ENCODE measurements at regions of chr7 and their contacts with region 1.

Region 1: DNA sequence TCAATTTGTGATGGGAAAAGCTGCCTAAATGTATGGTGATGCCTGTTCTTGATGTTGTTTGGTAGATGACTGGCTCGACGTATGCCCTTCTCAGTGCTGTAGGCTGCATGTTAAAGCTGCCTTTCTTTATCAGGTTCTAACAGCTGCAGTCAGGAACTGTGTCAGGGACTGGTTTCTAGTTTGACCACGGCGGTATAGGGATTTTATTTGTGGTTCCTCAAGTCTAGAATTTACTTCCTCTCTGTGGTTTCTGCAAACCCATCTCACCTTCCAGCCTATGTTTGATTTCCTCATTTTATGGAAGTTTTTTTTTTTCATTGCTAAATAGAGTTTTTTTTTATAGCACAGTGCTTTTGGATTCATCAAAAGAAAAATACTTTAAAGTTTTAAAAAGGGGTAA is 26.5 kb downstream of the LMTK2 start:
- DNase-seq: peak; percentile 51
- ATAC-seq: peak; percentile 82
- H3K4me3 Mint-ChIP-seq: peak overlapping the region; percentile 62
- H3K27ac Mint-ChIP-seq: peak overlapping the region; percentile 53
- H3K4me1 Mint-ChIP-seq: peaks cover 39% of the 10 kb centered on the region
- H3K27me3 Mint-ChIP-seq: peaks cover 33% of the 10 kb centered on the region

Region 2: DNA sequence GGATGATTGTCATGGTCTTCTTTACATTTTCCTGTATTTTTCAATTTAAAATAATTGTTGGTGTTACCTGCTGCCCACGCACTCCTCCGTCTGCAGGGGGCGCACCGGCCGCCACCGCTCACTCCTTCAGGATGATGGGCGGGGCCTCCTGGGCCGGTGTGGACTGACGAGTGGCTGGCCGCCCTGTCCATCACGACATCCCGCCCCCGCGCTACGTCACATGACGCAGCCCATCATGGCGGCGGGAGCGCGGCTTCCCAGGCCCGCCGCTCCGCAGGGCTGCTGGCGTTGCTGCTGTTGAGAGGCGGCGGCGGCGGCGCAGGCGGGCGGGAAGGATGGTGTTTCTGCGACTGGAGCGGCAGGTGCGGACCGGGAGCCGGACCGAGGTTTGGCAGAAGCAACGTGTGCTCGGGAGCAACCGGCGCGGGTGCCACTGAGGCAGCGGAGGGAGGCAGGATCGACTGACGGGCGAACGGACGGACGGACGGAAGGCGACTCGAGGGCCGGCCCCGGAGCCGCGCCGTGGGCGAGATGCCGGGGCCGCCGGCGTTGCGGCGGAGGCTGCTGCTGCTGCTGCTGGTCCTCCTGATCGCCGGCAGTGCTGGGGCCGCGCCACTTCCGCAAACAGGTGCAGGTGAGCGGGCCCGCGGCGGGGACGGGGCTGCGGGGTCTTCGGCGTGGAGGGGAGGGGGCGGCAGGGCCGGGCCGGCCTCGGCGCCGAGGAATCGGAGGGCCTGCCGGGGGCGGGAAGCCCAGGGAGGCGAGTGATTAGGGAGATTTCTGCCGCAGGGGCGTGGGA is 26.3 kb before region 1 on chr7 and contains the start of gene LMTK2:
- CTCF ChIA-PET with region 1: interaction called, 12 read pairs
- POLR2A ChIA-PET with region 1: interaction called, 7 read pairs
- DNase-seq: peak; percentile 95
- ATAC-seq: peak; percentile 100
- H3K4me3 Mint-ChIP-seq: peak within 1 kb of the TSS; percentile 95
- H3K27ac Mint-ChIP-seq: peak within 1 kb of the TSS; percentile 94
- H3K4me1 Mint-ChIP-seq: peaks cover 15% of the 10 kb centered on the region
- H3K27me3 Mint-ChIP-seq: no peaks in the 10 kb centered on the region
- total RNA-seq, gene LMTK2: 10.2 TPM

Region 3: GRCh38 chr7:98234429-98235147 is 101.4 kb after region 1 on chr7:
- CTCF ChIA-PET with region 1: no interaction called
- POLR2A ChIA-PET with region 1: no interaction called
- DNase-seq: no peak
- ATAC-seq: no peak
- H3K4me3 Mint-ChIP-seq: no peak overlapping the region
- H3K27ac Mint-ChIP-seq: no peak overlapping the region
- H3K4me1 Mint-ChIP-seq: no peaks in the 10 kb centered on the region
- H3K27me3 Mint-ChIP-seq: no peaks in the 10 kb centered on the region

Region 4: DNA sequence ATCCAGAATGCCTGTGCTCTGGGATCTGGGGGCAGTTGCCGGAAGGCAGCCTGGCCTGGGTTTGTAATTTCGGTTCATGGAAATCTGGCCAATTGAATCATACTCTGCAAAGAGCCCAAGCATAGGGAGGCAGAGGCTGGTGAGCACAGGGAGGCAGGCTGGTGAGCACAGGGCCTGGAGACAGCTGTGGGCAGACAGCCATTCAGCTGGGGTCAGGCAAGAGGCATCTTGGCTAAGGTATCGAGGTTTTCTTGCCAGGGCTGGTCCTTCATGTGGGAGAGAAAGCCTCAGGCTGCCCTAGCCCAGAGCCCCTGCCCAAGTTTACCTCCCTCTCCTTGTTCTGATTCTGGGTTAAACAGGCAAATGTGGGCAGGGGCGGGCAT is 331.4 kb after region 1 on chr7:
- CTCF ChIA-PET with region 1: no interaction called
- POLR2A ChIA-PET with region 1: no interaction called
- DNase-seq: no peak
- ATAC-seq: no peak
- H3K4me3 Mint-ChIP-seq: no peak overlapping the region
- H3K27ac Mint-ChIP-seq: no peak overlapping the region
- H3K4me1 Mint-ChIP-seq: no peaks in the 10 kb centered on the region
- H3K27me3 Mint-ChIP-seq: no peaks in the 10 kb centered on the region

Measured in activated CD8-positive, alpha-beta T cell treated with anti-CD3 and anti-CD28 coated beads, Interleukin-2, amount 10 ng/mL, durations not matched to agents 7 days and 5 days (primary cell).